Posterior vena cava (tissue), 2 donors: ENCODE measurements at regions of chr7 and their contacts with region 1.

Region 1: GRCh38 chr7:24848878-24849277 is 91.6 kb upstream of the GSDME start:
- DNase-seq: no peak

Region 2: DNA sequence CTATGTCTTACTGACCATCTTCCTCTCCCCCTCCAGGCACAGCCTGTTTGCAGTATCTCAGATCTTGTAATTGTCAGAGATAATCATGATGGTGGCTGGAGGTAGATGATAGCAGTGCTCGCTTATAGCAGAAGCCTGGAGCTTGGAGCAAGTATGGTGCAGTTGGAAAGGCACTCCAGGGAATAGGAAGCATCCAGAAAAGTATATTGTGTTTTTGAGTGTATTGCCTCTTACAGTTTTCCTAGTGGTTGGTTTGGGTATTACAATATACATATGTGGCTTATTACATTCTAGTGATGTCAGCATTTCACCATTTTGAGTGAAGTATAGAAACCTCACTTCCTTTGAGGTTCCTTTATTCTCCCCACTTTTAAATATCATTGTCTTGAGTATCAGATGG is 1037.3 kb before region 1 on chr7:
- intact Hi-C with region 1: loop called in 1 of 2 experiments (anchors 5 kb)
- DNase-seq: no peak

Region 3: DNA sequence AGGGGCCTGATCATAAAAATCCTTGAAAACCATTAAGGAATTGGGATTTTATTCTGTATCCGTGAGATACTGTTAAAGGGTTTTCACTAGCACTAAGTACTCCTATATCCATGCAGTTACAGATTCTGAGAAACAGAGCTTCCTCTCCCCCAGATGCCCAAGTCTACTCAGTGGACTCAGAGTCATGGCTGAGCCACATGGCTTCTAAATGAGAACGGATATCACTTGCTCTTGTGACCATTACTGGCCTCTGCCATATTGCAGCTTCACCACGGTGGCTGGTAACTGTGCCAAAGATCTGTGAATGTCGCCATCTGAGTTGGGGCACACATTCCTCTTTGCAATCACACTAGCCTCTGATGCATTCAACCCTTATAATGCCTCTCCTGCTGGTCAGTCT is 317.6 kb before region 1 on chr7:
- intact Hi-C with region 1: no loop called
- DNase-seq: no peak

Region 4: GRCh38 chr7:24907311-24907886 is 58.5 kb after region 1 on chr7:
- intact Hi-C with region 1: loop called in 1 of 2 experiments (anchors 2 kb)
- DNase-seq: no peak